ENCODE measurements at regions of chr12 and their contacts with region 1.

Region 1: DNA sequence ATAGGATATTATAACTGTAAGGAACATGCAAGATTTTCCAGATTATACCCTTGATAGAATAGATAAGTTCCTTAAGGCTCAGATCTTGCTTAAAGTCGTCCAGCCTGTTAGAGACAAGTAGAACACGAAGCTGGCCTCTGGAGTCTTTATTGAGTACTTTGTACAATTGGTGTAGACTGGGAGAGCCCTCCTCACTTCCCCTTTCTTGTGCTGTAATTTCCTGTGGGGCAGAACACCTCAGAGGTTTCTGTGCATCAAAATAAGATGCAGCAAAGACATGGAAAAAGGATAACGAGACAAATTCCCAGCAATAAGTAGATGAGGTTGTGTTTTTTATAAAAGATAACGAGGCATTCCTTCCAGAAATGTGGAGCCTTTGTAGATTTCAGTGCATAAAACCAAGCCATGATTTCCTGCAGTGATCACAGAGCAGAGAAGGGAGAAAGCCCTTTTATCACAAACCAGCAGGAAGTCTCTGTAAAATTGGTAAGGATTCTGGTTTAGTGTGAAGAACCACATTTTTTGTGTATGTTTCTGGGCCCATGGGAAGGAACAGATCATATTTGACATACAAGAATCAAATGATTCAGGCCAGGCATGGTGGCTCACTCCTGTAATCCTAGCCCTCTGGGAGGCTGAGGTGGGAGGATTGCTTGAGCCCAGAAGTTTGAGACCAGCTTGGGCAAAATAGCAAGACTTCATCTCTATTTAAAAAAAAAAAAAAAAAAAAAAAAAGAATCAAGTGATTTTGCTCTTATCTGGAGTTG is 18.0 kb downstream of the GPRC5A start:
- DNase-seq: no peak
- H3K4me3 ChIP-seq: no peak overlapping the region
- H3K27ac ChIP-seq: no peak overlapping the region
- H3K4me1 ChIP-seq: no peaks in the 10 kb centered on the region
- H3K27me3 ChIP-seq: no peaks in the 10 kb centered on the region
- CTCF ChIP-seq: no peak
- EP300 ChIP-seq: no peak
- POLR2A ChIP-seq: no peak
- RAD21 ChIP-seq: no peak

Region 2: GRCh38 chr12:12741660-12742059 is 167.8 kb before region 1 on chr12:
- CTCF ChIA-PET with region 1: no interaction called
- POLR2A ChIA-PET with region 1: no interaction called
- DNase-seq: no peak
- H3K4me3 ChIP-seq: no peak overlapping the region
- H3K27ac ChIP-seq: no peak overlapping the region
- H3K4me1 ChIP-seq: no peaks in the 10 kb centered on the region
- H3K27me3 ChIP-seq: no peaks in the 10 kb centered on the region
- CTCF ChIP-seq: no peak
- EP300 ChIP-seq: no peak
- POLR2A ChIP-seq: no peak
- RAD21 ChIP-seq: no peak

Region 3: DNA sequence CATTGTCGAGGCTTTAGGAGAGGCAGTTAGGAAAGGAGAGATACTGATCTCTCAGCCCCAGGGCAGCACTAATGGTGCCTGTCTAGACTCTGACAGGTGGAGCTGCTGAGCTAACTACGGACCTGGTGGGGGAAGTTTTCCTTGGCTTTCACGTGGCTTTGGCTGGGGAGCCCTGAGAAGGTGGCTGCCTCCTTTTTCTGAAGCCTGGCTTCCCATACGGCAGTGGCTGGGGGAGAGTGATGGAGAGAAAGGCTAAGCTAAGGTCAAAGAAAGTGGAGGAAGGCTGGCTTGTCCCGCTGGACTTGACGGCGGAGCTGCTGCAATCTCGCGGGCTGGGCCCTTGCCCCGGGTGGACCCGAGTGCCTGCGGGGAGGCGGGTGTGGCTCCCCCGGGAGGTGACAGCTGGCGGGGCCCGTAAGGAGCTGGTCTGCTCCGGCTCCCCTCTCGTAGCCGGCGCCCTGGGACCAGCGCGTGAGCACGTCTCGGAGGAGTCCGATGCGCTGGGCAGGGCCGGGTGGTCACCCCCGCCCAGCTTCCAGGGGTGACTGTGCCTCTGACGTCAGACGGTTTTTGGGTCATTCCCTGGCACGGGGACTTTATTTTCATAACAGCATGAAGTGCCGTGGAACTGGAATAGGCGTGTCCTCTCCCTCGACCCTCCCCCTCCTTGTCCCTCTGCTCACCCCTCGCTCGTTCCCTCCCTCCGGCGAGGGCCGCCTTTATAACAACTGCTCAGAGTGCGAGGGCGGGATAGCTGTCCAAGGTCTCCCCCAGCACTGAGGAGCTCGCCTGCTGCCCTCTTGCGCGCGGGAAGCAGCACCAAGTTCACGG is 18.4 kb before region 1 on chr12 and contains the start of gene GPRC5A:
- CTCF ChIA-PET with region 1: interaction called, 14 read pairs
- POLR2A ChIA-PET with region 1: interaction called, 3 read pairs
- DNase-seq: peak in 1 of 2 experiments; percentile 75
- H3K4me3 ChIP-seq: peak within 1 kb of the TSS; percentile 59 to 72 (median 66)
- H3K27ac ChIP-seq: no peak within 1 kb of the TSS
- H3K4me1 ChIP-seq: peaks cover 6 to 13% (median 9%) of the 10 kb centered on the region in 4 experiments; a peak in 5 of 7 replicates
- H3K27me3 ChIP-seq: peaks cover 0 to 36% (median 23%) of the 10 kb centered on the region in 4 experiments; a peak in 6 of 7 replicates
- CTCF ChIP-seq: peak; percentile 1 to 15 (median 11); a peak in 2 of 4 replicates
- EP300 ChIP-seq: no peak
- POLR2A ChIP-seq: no peak
- RAD21 ChIP-seq: peak; percentile 6 to 38; a peak in 3 of 4 replicates
- total RNA-seq, gene GPRC5A: 1.0 and 1.5 TPM in 2 replicates